ENCODE measurements at regions of chr7 and their contacts with region 1.

Region 1: DNA sequence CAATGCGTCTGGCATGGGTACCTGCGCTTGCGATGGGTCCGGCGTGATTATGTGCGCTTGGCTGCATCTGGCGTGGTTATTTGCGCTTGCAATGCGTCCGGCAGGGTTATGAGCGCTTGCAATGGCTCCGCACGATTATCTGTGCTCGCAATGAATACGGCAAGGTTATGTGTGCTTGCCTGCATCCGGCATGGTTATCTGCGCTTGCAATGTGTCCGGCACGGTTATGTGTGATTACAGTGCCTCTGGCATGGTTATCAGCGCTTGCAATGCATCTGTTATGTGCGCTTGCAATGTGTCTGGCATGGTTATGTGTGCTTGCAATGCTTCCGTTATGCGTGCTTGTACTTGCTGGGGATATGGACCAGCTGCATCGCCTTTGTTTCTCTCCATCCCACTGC is 37.7 kb downstream of the RBAK start:
- H3K4me3 Mint-ChIP-seq: no peak overlapping the region
- H3K27ac Mint-ChIP-seq: no peak overlapping the region
- H3K4me1 Mint-ChIP-seq: peaks cover 9% of the 10 kb centered on the region
- H3K27me3 Mint-ChIP-seq: peaks cover 32% of the 10 kb centered on the region

Region 2: GRCh38 chr7:4830176-4830575 is 253.1 kb before region 1 on chr7:
- intact Hi-C with region 1: loop called (anchors 1 kb)
- H3K4me3 Mint-ChIP-seq: no peak overlapping the region
- H3K27ac Mint-ChIP-seq: no peak overlapping the region
- H3K4me1 Mint-ChIP-seq: no peaks in the 10 kb centered on the region
- H3K27me3 Mint-ChIP-seq: peaks cover 2% of the 10 kb centered on the region

Region 3: DNA sequence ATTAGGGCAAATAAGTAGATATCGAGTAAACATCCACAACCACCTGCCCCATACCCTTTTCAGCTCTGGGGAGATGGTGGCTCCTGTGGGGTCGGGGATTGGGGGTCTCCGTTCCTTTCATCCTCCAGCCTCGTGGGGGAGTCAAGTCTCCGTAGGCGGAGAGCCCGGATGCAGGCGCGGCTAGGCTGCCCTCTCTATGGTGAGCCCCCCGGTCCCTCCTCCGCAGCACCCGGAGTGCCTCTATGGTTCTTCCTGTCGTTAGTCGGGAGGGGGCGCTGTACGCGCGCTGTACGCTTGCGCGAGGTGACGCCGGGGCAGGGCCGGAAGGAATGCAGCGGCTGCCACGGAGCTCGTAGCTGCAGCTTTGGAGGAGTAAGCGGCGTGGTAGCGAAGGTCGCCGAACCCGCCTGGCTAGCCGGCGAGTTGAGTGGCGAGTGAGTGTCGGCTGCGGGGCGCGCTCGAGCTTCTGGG is 109.5 kb before region 1 on chr7:
- intact Hi-C with region 1: loop called (anchors 1 kb)
- H3K4me3 Mint-ChIP-seq: peak overlapping the region; percentile 91
- H3K27ac Mint-ChIP-seq: peak overlapping the region; percentile 97
- H3K4me1 Mint-ChIP-seq: peaks cover 12% of the 10 kb centered on the region
- H3K27me3 Mint-ChIP-seq: peaks cover 3% of the 10 kb centered on the region

Region 4: GRCh38 chr7:5218564-5219360 is 135.5 kb after region 1 on chr7:
- intact Hi-C with region 1: no loop called
- H3K4me3 Mint-ChIP-seq: peak overlapping the region; percentile 22
- H3K27ac Mint-ChIP-seq: peak overlapping the region; percentile 77
- H3K4me1 Mint-ChIP-seq: peaks cover 33% of the 10 kb centered on the region
- H3K27me3 Mint-ChIP-seq: no peaks in the 10 kb centered on the region

Measured in dendritic cell treated with granulocyte-macrophage colony-stimulating factor and Interleukin-4, amounts not matched to agents 40 ng/mL and 50 ng/mL, for 4 days (primary cell).